Activated T-helper 2 cell treated with anti-CD3 and anti-CD28 coated beads, Interferon-gamma antibody, Interleukin-2, Interleukin-4, amounts not matched to agents 10 μg/mL and 5 μg/mL and 100 μg/mL, durations not matched to agents 14 hours and 24 hours and 36 hours (primary cell): ENCODE measurements at regions of chr1 and their contacts with region 1.

Region 1: GRCh38 chr1:20507564-20508410 is at the start of gene MUL1:
- DNase-seq: peak; percentile 90
- H3K4me3 Mint-ChIP-seq: peak within 1 kb of the TSS; percentile 82
- H3K27ac Mint-ChIP-seq: peak within 1 kb of the TSS; percentile 80
- H3K4me1 Mint-ChIP-seq: peaks cover 4% of the 10 kb centered on the region
- H3K27me3 Mint-ChIP-seq: peaks cover 3% of the 10 kb centered on the region
- total RNA-seq, gene MUL1: 17.1 and 17.4 TPM in 2 replicates

Region 2: DNA sequence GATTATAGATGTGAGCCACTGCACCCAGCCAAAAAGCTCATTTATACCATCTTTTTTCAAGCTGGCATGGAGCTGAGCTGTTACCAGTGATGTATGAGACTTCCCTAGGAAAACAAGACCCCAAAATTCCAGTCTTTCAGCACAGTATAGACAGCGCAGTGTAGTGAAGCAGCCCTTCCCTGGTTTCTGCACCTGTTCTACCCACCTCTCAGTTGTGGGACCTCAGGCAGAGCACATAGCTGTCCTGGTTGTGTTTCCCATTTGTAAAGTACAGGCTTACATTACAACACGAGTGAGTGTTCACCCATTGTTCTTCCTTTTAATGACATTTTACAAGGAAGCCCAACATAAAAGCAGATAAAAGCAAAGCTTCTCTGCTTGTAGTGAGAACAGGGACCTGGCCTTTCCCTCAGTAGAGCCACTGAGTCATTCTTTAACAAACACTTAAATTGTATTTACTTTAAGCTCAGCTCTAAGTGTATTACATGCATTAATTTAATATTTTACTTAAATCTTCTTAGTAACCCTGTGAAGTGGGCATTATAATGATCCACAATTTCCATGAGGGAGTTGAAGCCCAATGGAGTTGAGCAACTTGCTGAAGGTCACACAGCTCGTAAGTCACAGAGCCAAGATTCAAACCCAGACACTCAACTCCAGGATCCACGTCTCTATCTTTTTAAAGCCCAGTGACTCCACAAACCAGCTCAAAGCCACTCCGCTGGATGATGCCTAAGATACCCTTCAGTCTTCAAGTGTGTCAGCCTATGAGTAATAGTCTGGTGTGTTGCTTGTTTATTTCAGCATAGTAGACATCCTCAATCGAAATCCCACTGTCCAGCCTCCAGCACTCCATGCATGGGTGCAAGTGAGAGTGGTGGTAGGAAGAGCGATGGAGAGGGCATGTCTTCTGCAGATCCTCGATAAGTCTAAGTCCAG is 981.9 kb before region 1 on chr1:
- intact Hi-C with region 1: no loop called
- DNase-seq: no peak
- H3K4me3 Mint-ChIP-seq: no peak overlapping the region
- H3K27ac Mint-ChIP-seq: no peak overlapping the region
- H3K4me1 Mint-ChIP-seq: peaks cover 2% of the 10 kb centered on the region
- H3K27me3 Mint-ChIP-seq: no peaks in the 10 kb centered on the region

Region 3: DNA sequence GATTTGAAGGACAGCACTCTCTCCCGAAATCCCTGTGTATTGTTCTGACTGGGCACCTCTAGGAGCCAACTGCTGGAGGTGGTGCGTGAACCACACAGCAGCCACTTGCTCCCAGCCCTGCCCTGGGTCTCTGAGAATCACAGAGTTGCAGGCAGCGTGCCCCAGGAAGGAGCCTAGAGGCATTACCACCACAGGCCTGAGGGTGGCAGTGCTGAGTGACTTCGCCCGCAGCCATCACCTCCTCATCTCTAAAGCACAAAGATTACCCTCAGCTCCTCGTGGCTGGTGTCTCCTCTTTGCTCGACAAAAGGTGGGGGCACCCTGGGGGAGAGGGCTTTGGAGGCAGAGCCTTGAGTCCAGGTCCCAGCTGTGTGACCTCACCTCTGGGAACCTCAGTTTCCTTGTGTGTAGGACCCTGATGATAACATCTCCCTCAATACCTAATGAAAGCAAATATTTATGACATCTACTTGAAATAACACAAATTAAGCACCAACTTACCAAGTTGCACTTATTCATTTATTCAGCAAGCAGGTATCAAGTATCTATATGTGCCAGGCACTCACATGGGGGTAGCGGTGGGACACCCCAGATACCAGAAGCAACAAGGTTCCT is 130.8 kb before region 1 on chr1:
- intact Hi-C with region 1: loop called (anchors 5 kb)
- DNase-seq: peak; percentile 33
- H3K4me3 Mint-ChIP-seq: no peak overlapping the region
- H3K27ac Mint-ChIP-seq: no peak overlapping the region
- H3K4me1 Mint-ChIP-seq: peaks cover 4% of the 10 kb centered on the region
- H3K27me3 Mint-ChIP-seq: peaks cover 27% of the 10 kb centered on the region

Region 4: DNA sequence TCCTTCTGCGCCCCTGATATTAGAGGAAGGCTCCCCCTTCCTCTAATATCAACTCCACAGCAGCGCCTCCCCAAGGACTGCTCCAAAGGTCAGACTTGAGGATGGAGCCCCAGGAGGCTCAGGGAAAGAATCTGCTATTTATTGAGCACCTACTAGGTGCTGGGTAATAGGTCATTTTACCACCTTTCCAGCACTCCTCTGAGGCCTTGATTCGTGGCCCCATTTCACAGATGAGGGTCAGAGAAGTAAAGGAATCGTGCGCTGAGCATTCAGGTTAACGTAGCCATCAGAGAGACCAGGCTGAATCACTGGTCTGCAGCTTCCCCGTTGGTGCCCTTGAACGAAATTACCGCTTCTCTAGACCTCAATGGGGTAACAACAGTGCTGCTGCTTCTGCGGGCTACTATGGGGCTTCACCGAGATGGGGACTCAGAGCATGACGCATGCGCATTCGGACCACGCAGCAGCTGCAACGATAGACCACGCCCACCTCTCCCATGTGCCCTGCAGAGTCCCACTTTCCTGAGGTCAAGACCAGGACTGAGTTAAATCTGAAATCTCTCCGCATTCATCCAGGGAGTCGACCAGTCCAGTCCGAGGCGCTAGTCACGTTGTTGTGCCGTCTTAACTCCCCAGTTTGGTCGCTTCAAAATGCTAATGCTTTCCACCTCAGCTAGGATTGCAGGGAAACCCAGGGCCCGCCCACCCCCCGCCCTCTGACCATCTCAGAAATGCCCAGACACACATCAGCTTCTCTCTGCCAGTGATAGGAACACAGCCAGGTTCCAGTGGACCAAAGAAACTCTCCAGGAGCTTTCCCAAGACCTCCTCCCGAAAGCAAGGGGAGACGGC is 34.7 kb before region 1 on chr1:
- intact Hi-C with region 1: no loop called
- DNase-seq: no peak
- H3K4me3 Mint-ChIP-seq: no peak overlapping the region
- H3K27ac Mint-ChIP-seq: no peak overlapping the region
- H3K4me1 Mint-ChIP-seq: no peaks in the 10 kb centered on the region
- H3K27me3 Mint-ChIP-seq: peaks cover 46% of the 10 kb centered on the region

Region 5: GRCh38 chr1:20493839-20494608 is 13.8 kb before region 1 on chr1:
- intact Hi-C with region 1: loop called (anchors 2 kb)
- DNase-seq: peak; percentile 71
- H3K4me3 Mint-ChIP-seq: no peak overlapping the region
- H3K27ac Mint-ChIP-seq: no peak overlapping the region
- H3K4me1 Mint-ChIP-seq: peaks cover 7% of the 10 kb centered on the region
- H3K27me3 Mint-ChIP-seq: peaks cover 21% of the 10 kb centered on the region

Region 6: GRCh38 chr1:20558191-20558590 is 50.4 kb after region 1 on chr1:
- intact Hi-C with region 1: no loop called
- DNase-seq: no peak
- H3K4me3 Mint-ChIP-seq: no peak overlapping the region
- H3K27ac Mint-ChIP-seq: no peak overlapping the region
- H3K4me1 Mint-ChIP-seq: no peaks in the 10 kb centered on the region
- H3K27me3 Mint-ChIP-seq: peaks cover 21% of the 10 kb centered on the region

Region 7: GRCh38 chr1:20633190-20634064 is 125.6 kb after region 1 on chr1 and contains the start of gene PINK1:
- intact Hi-C with region 1: loop called (anchors 5 kb)
- DNase-seq: peak; percentile 86
- H3K4me3 Mint-ChIP-seq: peak within 1 kb of the TSS; percentile 80
- H3K27ac Mint-ChIP-seq: peak within 1 kb of the TSS; percentile 33
- H3K4me1 Mint-ChIP-seq: peaks cover 6% of the 10 kb centered on the region
- H3K27me3 Mint-ChIP-seq: peaks cover 1% of the 10 kb centered on the region
- total RNA-seq, gene PINK1: 3.8 and 4.7 TPM in 2 replicates

Region 8: DNA sequence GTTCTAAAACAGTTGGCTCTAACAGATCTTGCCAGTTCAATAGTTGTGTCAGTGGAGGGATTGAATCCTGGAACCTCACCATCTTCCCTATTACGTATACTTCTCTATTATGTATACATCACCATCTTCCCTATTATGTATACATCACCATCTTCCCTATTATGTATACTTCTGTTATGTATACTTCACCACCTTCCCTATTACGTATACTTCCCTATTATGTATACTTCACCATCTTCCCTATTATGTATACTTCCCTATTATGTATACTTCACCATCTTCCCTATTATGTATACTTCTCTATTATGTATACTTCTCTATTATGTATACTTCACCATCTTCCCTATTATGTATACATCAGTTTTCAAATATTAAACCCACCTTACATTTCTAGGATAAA is 313.7 kb after region 1 on chr1:
- intact Hi-C with region 1: no loop called
- DNase-seq: no peak
- H3K4me3 Mint-ChIP-seq: no peak overlapping the region
- H3K27ac Mint-ChIP-seq: no peak overlapping the region
- H3K4me1 Mint-ChIP-seq: no peaks in the 10 kb centered on the region
- H3K27me3 Mint-ChIP-seq: no peaks in the 10 kb centered on the region